Lower leg skin (tissue), 4 donors: ENCODE measurements at regions of chr6 and their contacts with region 1.

Region 1: DNA sequence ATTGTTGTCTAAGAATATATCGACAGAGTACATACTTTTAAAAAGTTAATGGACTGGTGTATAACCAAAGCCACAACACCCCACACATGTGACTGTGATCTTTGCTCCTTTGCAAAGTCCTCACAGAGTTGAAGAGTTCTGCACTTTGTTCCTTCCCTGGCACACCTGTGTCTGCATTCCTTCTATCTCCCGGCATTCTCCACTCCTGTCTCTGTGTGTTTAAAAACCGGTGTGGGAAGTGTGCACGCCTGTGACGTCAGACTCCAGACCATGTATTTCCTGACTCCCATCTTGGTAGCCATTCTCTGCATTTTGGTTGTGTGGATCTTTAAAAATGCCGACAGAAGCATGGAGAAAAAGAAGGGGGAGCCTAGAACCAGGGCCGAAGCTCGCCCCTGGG is at the start of gene IYD:
- DNase-seq: no peak
- H3K4me3 ChIP-seq: no peak within 1 kb of the TSS
- CTCF ChIP-seq: no peak
- POLR2A ChIP-seq: no peak
- total RNA-seq, gene IYD: 0.42 to 3.1 (median 0.99) TPM

Region 2: GRCh38 chr6:150452428-150453243 is 83.9 kb after region 1 on chr6:
- intact Hi-C with region 1: no loop called
- DNase-seq: no peak
- H3K4me3 ChIP-seq: no peak overlapping the region
- CTCF ChIP-seq: no peak
- POLR2A ChIP-seq: no peak

Region 3: GRCh38 chr6:150813319-150813992 is 444.7 kb after region 1 on chr6:
- intact Hi-C with region 1: no loop called
- DNase-seq: no peak
- H3K4me3 ChIP-seq: no peak overlapping the region
- CTCF ChIP-seq: no peak
- POLR2A ChIP-seq: no peak

Region 4: DNA sequence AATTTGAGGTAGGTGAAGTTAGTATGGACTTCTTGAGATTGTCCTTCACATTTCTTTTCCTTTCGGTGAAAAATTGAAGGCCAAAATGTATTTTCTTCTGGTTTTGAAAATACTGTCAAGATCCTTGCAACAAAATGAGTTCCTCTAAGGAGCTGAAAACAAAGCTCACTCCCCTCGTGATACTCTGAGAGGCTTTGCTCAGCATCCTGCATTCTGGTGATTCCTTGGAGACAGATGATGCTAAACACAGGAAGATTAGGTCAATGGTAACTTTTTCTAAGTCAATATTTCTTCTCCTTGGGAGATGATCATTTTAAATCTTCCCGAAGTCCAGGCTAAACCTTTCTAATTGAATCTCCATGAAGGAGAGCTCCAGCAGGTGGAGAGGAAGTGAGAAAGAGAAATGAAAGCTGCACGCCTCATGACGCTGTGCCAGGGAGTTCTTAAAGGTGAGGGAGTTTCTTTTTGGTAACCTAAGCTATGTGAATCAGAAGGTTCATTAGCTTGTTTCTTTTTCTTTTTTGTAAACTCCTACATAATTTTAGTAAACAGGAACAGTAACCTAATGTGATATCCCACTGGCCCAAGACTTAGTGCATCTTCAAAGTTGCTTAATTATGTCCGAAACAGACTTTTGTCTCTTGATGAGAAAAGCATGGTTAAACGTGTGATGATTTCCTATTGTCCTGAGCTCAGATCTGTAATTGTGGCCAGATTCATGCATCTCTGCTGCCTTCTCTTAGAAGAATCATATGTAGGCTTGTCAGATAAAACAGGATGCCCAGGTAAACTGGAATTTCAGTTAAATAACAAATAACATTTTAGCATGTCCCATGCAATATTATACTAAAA is 1453.7 kb after region 1 on chr6:
- intact Hi-C with region 1: loop called (anchors 10 kb)
- DNase-seq: no peak
- H3K4me3 ChIP-seq: no peak overlapping the region
- CTCF ChIP-seq: no peak
- POLR2A ChIP-seq: no peak